ENCODE measurements at regions of chr6 and their contacts with region 1.

Region 1: DNA sequence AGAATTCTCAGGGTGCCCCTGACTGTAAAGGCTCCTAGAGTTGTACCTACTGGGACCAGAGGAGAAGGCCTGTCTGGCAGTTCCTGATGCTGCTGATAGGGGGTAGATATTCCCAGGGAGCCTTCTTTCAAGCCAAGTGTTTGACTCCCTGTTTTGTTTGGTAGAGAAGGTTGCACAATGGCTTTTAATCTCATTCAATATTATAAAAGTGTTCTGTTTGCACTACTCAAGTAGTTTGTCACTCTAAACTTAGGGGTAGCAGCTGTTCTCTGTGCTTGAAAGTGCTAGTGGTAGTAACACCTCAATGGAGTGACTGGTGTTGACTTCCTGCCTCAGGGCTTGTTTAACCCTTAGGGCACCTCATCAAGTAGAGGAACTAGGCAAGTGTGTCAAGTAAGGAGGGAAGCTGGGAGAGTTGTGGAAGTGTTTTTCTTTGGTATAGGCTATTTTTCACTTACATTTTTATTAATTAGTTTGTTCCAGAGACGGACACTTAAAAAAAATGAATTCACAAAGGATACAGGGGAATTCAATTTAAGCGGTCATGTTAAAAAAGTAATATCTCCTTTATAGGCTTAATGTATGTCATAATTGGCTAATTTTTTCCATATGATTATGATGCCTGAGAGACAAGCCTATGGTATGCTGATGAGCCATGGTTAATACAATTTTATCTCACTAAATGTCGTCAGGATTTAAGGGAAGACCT is 38.1 kb downstream of the BICRAL start:
- DNase-seq: no peak

Region 2: GRCh38 chr6:42604150-42604549 is 215.8 kb before region 1 on chr6:
- intact Hi-C with region 1: no loop called
- DNase-seq: no peak

Region 3: DNA sequence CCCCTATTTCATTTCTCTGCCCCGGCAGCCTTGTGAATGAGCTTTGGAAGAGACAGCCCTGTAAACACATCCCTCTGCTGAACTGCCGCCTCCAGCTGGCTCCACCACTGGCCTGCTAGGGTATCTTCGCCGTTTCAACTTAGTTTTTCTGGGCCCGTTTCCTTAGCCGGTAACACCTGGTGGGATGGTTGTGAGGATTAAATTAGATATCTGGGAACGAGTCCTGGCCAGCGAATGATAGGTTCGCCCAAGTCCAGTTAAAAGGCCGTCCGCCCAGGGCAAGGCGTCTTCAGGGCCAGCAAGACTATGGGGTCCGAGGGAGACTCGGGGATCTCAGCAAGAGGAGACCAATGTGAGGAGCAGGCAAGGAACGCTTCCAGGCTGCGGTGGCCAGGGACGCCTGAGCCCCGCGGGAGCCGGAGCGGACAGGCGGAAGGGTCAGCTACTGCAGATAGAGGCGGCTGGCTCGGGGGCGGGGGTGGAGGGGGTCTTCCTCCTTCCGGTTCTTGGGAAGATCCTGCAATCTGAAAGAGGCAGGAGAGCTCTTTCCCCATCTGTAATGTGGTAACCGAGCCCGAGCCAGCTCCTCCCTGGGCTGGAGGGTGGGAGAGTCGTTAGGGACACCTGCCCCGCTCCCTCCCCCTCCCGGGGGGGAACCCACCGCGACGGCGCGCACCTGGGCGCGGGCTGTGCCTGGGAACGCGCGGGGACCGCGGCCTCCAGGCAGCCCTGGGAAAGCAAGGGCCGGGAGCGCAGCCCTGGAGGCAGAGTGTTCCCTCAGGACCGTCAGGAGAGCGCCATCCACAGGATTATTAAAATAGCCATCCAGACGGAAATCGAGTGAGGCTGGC is 91.4 kb after region 1 on chr6:
- intact Hi-C with region 1: no loop called
- DNase-seq: no peak

Region 4: GRCh38 chr6:43369174-43370022 is 549.4 kb after region 1 on chr6 and contains the start of gene ZNF318:
- intact Hi-C with region 1: loop called in 1 of 2 experiments (anchors 5 kb)
- DNase-seq: peak; percentile 99
- total RNA-seq, gene ZNF318: 11.2 to 13.9 TPM